Activated T-helper 2 cell treated with anti-CD3 and anti-CD28 coated beads, Interferon-gamma antibody, Interleukin-2, Interleukin-4, amounts not matched to agents 10 μg/mL and 5 μg/mL and 100 μg/mL, durations not matched to agents 14 hours and 24 hours and 36 hours (primary cell): ENCODE measurements at regions of chr4 and their contacts with region 1.

Region 1: GRCh38 chr4:2220016-2220630 is 21.8 kb downstream of the HAUS3 start:
- DNase-seq: peak; percentile 66
- H3K4me3 Mint-ChIP-seq: no peak overlapping the region
- H3K27ac Mint-ChIP-seq: no peak overlapping the region
- H3K4me1 Mint-ChIP-seq: peaks cover 8% of the 10 kb centered on the region
- H3K27me3 Mint-ChIP-seq: peaks cover 3% of the 10 kb centered on the region

Region 2: GRCh38 chr4:2441393-2442174 is 221.5 kb after region 1 on chr4:
- intact Hi-C with region 1: loop called (anchors 1 kb)
- DNase-seq: peak; percentile 65
- H3K4me3 Mint-ChIP-seq: no peak overlapping the region
- H3K27ac Mint-ChIP-seq: no peak overlapping the region
- H3K4me1 Mint-ChIP-seq: peaks cover 2% of the 10 kb centered on the region
- H3K27me3 Mint-ChIP-seq: no peaks in the 10 kb centered on the region